ENCODE measurements at regions of chr6 and their contacts with region 1.

Region 1: GRCh38 chr6:30742316-30743098 is at the start of gene FLOT1:
- DNase-seq: peak; percentile 83 to 95 (median 90)
- H3K4me3 ChIP-seq: peak within 1 kb of the TSS; percentile 54 to 98 (median 87)
- H3K27ac ChIP-seq: peak within 1 kb of the TSS; percentile 63 to 97 (median 90)
- H3K27me3 ChIP-seq: no peaks in the 10 kb centered on the region
- CTCF ChIP-seq: peak in 21 of 56 donors; percentile 1 to 50 (median 24)
- total RNA-seq, gene FLOT1: 130 to 270 (median 200) TPM

Region 2: DNA sequence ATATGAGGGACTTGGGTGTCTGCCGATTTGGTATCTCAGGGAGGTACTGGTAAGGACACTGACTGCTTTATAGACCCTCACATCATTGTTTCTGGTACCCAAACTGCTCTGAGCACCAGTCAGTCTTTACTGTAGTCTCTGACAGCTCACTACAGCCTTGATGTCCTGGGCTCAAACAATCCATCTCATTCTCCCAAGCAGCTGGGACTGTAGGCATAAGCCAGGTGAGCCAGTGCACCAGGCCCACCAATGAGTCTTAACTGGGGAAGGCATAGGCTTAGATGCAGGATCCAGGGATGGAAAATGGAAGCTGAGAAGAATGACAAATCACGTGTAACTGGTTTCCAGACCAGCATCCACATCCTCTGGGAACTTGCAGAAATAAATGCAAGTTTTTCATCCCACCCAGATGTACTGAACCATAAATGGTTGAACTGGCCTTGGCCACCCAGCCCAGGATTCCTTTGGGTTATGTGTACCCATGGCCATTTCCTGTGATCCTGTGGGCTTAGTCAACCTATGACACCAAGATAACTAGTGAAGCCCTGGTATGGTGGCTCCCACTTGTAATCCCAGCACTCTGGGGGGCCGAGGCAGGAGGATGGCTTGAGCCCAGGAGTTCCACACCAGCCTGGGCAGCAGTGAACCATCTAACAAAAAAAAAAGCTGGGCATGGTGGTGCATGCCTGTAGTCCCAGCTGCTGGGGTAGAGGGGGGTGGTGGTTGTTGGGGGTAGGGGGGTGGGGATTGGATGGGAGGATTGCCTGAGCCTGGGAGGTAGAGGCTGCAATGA is 16.6 kb before region 1 on chr6:
- intact Hi-C with region 1: loop called (anchors 1 to 2 kb)
- DNase-seq: no peak
- H3K4me3 ChIP-seq: no peak overlapping the region
- H3K27ac ChIP-seq: peak overlapping the region in 29 of 59 donors; percentile 2 to 64 (median 37)
- H3K27me3 ChIP-seq: no peaks in the 10 kb centered on the region
- CTCF ChIP-seq: no peak

Region 3: GRCh38 chr6:30774701-30775100 is 32.2 kb after region 1 on chr6:
- intact Hi-C with region 1: no loop called
- DNase-seq: no peak
- H3K4me3 ChIP-seq: no peak overlapping the region
- H3K27ac ChIP-seq: no peak overlapping the region
- H3K27me3 ChIP-seq: no peaks in the 10 kb centered on the region
- CTCF ChIP-seq: no peak

Region 4: DNA sequence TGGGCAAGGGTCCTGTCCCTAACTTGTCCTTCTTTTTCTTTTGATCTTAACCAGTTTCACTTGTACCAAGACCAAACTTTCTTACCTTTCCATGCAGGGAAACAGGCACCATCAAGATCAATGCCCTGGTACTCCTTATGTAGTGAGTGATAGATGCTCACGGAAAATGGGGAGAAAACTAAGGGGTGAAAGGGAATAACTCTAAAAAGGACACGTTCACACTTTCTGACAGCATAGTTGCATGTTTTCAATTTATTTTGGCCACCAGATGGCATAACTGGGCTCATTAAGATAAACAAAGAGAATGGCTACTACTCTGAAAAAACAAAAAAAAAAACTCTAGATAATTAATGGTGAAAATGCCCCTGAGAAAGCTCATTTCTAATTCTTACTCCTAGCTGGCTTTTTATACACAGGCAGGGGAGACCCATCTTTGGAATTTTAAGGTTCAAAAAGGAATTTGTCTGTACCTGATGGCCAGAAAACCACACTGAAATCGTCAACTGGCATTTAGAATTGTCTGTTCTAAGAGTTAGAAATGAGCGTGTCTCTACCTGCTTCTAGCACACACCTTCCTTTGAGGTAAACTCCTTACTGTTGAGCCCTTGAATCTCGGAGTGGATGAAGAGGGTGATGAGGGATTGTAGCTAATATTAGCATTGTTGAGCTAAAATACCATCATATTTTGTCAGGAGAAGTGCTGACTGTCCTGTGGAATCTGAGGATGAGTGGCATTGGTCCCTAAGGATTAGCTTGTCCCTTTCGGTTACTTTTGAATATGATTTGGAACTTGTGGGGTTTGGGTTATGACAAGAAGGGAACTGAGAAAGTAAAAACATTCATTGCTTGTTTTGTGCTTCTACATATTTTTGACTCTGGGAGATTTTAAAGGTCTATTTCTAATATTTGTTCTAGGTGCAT is 79.6 kb after region 1 on chr6:
- intact Hi-C with region 1: loop called (anchors 5 kb)
- DNase-seq: no peak
- H3K4me3 ChIP-seq: no peak overlapping the region
- H3K27ac ChIP-seq: peak overlapping the region in 5 of 59 donors; percentile 13 to 51 (median 26)
- H3K27me3 ChIP-seq: no peaks in the 10 kb centered on the region
- CTCF ChIP-seq: peak; percentile 41 to 79 (median 62)

Region 5: DNA sequence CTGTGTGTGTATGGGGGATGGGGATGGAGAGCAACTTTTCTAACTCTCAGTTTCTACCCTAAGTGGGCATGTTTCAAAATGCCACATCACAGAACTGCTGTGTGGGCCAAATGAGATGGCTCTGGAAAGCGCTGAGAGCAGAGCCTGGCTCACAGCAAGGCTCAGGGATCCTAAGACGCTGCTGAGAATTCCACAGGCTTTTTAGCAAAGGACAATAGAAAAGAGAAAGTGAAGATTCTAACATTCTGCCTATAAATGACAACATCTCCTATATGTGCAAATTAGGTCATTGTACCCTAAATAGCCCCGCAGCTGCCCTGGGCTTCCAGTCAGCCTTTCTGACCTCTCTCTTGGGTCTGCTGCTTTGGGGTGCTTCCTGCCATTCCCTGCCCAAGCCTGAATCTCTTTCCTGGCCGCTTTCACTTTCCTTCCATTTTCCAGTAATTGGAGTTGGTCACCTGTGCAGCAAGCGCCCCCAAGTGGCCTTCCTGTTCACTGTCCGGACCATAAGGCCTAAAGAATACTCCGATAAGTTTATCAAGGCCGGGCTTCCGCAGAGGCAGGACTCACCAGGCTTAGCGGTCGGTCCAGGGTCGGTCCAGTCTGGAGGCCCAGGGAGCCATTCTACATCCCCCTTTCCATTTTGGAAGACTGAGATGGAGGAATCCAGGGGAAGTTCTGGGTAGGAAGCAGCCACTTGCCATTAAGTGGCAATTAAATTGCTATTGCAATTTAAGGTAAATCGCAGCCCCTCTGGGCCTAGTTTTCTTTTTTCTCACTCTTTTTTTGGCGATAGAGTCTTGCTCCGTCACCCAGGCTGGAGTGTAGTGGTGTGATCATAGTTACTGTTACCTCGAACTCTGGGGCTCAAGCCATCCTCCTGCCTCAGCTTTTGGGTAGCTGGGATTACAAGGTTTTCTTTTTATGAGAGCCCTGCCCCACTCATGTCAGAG is 135.2 kb after region 1 on chr6:
- intact Hi-C with region 1: loop called (anchors 1 to 5 kb)
- DNase-seq: peak; percentile 80 to 95 (median 89)
- H3K4me3 ChIP-seq: peak overlapping the region; percentile 15 to 67 (median 50)
- H3K27ac ChIP-seq: peak overlapping the region in 58 of 59 donors; percentile 3 to 95 (median 80)
- H3K27me3 ChIP-seq: no peaks in the 10 kb centered on the region
- CTCF ChIP-seq: peak; percentile 73 to 98 (median 93)

Region 6: DNA sequence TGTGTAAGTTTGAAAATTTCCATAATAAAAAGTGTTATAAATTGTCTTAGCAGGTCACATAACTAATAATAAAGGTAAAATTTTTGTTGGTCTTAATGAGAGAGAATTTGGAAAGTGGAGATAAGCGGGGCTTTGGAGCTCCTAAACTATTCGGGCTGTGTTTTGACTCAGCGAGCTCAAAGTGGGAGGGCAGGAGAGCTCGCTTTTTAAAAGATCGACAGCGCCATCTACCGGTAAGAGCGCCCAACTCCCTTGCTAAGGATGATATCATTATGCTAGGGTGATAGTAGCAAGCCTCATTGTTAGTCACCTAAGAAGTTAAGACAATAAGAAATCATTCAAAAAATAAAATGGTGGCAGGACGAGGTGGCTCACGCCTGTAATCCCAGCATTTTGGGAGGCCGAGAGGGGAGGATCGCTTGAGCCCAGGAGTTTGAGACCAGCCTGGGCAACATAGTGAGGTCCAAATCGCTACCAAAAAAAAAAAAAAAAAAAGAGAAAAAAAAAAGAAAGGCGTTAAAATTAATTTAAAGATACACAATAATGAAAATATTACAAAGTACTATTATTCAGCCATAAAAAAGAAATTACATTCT is 345.1 kb after region 1 on chr6:
- intact Hi-C with region 1: loop called in 1 of 2 experiments (anchors 5 kb)
- DNase-seq: peak; percentile 76 to 91 (median 84)
- H3K4me3 ChIP-seq: no peak overlapping the region
- H3K27ac ChIP-seq: no peak overlapping the region
- H3K27me3 ChIP-seq: no peaks in the 10 kb centered on the region
- CTCF ChIP-seq: peak; percentile 54 to 96 (median 83)

Measured in dorsolateral prefrontal cortex (tissue), 120 donors.